CD8-positive, alpha-beta memory T cell (primary cell): ENCODE measurements at regions of chr6 and their contacts with region 1.

Region 1: GRCh38 chr6:25263657-25264056 is 15.5 kb upstream of the CARMIL1 start:
- DNase-seq: no peak
- H3K4me3 ChIP-seq: no peak overlapping the region
- H3K4me3 Mint-ChIP-seq: no peak overlapping the region
- H3K27ac ChIP-seq: no peak overlapping the region
- H3K27ac Mint-ChIP-seq: no peak overlapping the region
- H3K4me1 ChIP-seq: no peaks in the 10 kb centered on the region
- H3K4me1 Mint-ChIP-seq: peaks cover 0 to 4% (median 3%) of the 10 kb centered on the region in 3 donors
- H3K27me3 ChIP-seq: no peaks in the 10 kb centered on the region
- H3K27me3 Mint-ChIP-seq: peaks cover 0 to 6% of the 10 kb centered on the region in 2 donors

Region 2: GRCh38 chr6:25202505-25202904 is 61.2 kb before region 1 on chr6:
- CTCF ChIA-PET with region 1: no interaction called
- POLR2A ChIA-PET with region 1: no interaction called
- DNase-seq: no peak
- H3K4me3 ChIP-seq: no peak overlapping the region
- H3K4me3 Mint-ChIP-seq: no peak overlapping the region
- H3K27ac ChIP-seq: no peak overlapping the region
- H3K27ac Mint-ChIP-seq: no peak overlapping the region
- H3K4me1 ChIP-seq: no peaks in the 10 kb centered on the region
- H3K4me1 Mint-ChIP-seq: no peaks in the 10 kb centered on the region
- H3K27me3 ChIP-seq: no peaks in the 10 kb centered on the region
- H3K27me3 Mint-ChIP-seq: peaks cover 16 to 26% of the 10 kb centered on the region in 2 donors

Region 3: GRCh38 chr6:25490018-25490801 is 226.6 kb after region 1 on chr6:
- CTCF ChIA-PET with region 1: interaction called, 73 read pairs
- POLR2A ChIA-PET with region 1: no interaction called
- DNase-seq: peak; percentile 23 to 74 (median 41)
- H3K4me3 ChIP-seq: no peak overlapping the region
- H3K4me3 Mint-ChIP-seq: no peak overlapping the region
- H3K27ac ChIP-seq: no peak overlapping the region
- H3K27ac Mint-ChIP-seq: peak overlapping the region in 1 of 8 donors; percentile 55
- H3K4me1 ChIP-seq: no peaks in the 10 kb centered on the region
- H3K4me1 Mint-ChIP-seq: peaks cover 0 to 7% (median 1%) of the 10 kb centered on the region in 3 donors
- H3K27me3 ChIP-seq: no peaks in the 10 kb centered on the region
- H3K27me3 Mint-ChIP-seq: peaks cover 0 to 3% of the 10 kb centered on the region in 2 donors